ENCODE measurements at regions of chrX and their contacts with region 1.

Region 1: GRCh38 chrX:16239211-16239610 is 71.9 kb downstream of the MAGEB17 start:
- DNase-seq: no peak
- H3K4me3 ChIP-seq: no peak overlapping the region
- H3K27ac ChIP-seq: no peak overlapping the region
- H3K4me1 ChIP-seq: no peaks in the 10 kb centered on the region
- H3K27me3 ChIP-seq: no peaks in the 10 kb centered on the region
- CTCF ChIP-seq: no peak
- EP300 ChIP-seq: no peak
- POLR2A ChIP-seq: no peak

Region 2: DNA sequence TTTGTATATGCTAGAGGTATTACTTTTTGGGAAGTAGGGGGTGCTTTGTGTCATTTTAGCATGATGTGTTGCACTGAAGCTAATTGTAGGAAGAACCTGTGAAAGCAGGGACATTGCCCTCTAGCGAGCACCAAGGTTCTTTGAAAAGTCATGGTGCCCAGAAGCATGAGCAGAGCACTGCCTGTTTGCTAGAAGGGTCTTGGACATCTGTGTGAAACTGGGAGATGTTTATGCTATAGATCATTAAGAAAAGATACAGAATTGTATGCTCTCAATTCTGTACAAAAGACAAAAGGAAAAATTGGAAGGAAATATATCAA is 101.1 kb before region 1 on chrX:
- in situ Hi-C with region 1: loop called in 1 of 4 experiments (anchors 25 kb)
- intact Hi-C with region 1: no loop called
- DNase-seq: no peak
- H3K4me3 ChIP-seq: no peak overlapping the region
- H3K27ac ChIP-seq: no peak overlapping the region
- H3K4me1 ChIP-seq: no peaks in the 10 kb centered on the region
- H3K27me3 ChIP-seq: no peaks in the 10 kb centered on the region
- CTCF ChIP-seq: no peak
- EP300 ChIP-seq: no peak
- POLR2A ChIP-seq: no peak

Region 3: DNA sequence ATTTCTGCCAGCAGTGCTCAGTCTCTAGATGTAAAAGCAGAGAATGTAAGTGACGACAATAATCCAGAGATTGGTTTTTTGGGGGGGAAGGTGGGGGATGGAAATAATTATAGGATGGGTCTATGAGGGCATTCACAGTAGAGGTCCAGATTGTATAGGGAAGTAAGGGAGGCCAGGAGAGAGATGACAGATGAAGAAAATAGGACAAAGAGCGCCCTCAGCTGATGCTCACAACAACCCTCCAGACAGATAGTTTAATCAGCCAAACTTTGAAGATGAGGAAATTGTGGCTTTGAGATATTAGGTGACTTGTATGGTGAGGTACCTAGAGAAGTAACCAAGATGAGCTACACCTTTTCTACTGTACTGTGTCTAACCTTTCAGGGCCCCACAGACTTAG is 66.0 kb after region 1 on chrX:
- in situ Hi-C with region 1: no loop called
- intact Hi-C with region 1: no loop called
- DNase-seq: no peak
- H3K4me3 ChIP-seq: no peak overlapping the region
- H3K27ac ChIP-seq: no peak overlapping the region
- H3K4me1 ChIP-seq: no peaks in the 10 kb centered on the region
- H3K27me3 ChIP-seq: no peaks in the 10 kb centered on the region
- CTCF ChIP-seq: no peak
- EP300 ChIP-seq: no peak
- POLR2A ChIP-seq: no peak